HEK293T (cell line): ENCODE measurements at regions of chr5 and their contacts with region 1.

Region 1: DNA sequence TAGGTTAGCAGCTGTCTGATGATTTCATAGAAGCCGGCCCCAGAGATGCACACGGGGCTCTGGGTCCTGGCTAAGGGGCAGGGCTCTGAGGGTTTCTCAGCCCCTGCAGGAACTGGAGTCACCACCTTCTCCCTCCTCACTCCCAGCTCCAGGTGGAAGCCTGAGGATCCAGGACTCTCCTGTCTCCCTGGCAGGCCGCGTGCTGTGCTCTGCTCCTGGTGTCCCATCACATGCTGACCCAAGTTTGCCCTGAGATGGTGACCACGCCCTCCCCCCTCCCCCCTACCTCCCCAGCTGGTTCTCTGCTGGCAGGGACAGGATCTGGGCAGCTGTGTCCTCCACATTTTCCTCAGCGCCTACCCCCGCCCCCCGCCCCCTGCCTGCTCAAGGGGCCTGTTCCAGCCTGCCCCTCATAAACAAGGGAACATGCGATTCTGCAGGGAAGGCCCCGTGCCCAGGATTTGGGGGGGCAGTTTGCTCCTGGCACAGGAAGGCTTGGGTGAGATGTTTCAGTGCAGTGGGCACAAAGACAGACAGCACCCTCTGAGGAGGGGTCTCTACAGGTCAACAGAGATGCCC is 87.4 kb downstream of the PSD2 start:
- DNase-seq: no peak

Region 2: DNA sequence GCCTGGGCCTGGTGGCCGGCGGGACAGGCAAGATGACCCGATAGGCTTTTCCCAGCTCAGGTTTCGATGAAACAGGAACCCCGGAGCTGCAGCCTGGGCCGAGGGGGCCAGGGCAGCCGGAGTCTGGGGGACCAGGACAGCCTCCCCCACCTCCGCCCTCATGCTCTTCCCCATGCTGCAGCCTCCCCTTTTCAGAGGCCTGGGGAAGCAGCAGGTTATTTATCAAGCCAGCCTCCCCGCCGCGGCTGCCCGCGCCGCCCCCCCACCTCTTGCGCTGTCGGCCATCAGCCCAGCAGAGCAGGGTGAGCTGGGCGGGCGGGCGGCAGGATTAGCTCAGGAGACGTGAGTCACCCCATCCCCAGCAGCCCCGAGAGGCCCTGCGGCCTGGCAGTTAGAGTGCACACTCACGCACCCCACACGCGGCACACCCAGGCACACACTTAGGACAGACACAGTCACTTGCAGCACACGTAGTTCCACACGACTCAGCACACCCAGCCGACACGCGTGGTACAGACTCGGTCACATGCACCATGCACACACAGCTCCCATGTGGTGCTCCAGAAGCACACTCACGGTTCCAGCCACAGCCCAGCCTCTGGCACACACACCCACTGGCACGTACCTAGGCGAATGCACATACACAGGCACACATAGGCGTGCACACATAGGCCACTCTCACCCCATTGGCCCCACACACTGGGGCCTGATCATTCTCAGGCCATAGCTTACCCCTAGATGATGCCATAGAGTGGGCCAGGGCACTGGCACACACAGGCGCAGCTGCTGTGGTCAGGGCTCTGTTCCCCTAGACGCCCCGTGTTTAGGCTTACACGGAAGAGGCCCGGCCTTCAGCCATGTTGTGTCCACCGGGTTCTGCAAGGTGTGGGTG is 221.9 kb before region 1 on chr5:
- CTCF ChIA-PET with region 1: no interaction called
- POLR2A ChIA-PET with region 1: no interaction called
- DNase-seq: no peak

Region 3: GRCh38 chr5:139852696-139853095 is 30.4 kb before region 1 on chr5:
- CTCF ChIA-PET with region 1: no interaction called
- POLR2A ChIA-PET with region 1: no interaction called
- DNase-seq: no peak

Region 4: DNA sequence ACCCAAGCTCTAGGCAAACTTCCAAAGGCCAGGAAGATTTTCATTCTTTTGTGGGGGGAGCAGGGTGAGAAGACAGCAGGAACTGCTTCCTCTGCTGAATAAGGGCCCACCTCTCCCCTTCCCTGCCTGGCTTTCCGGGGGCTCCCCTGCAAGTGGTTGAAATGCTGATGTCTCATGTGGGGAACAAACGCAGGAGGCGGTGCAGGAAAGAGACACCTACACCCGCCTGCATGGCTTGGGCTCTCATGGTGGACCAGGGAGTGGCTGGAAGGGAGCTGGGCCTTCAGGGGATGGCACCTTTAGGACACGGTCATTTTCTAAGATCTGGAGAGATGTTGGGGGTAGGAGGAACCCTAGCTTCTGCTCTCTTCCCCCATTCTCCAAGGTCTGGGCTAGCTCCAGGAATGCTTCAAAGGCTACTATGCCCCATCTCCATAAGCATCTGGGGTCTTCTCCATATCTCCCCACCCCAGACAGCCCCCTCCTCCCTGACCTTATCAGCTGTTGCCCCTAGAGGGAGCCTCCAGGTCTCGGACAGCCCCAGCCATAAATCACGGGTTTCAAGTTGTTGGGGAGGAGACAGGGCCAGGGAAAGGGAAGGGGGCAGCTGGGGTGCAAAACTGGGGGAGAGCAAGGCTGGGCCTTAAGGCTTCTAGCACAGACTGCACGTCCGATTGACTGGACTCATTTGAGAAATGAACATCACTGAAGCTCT is 10.8 kb before region 1 on chr5:
- CTCF ChIA-PET with region 1: interaction called, 13 read pairs
- POLR2A ChIA-PET with region 1: no interaction called
- DNase-seq: no peak

Region 5: GRCh38 chr5:139908749-139909148 is 25.7 kb after region 1 on chr5:
- CTCF ChIA-PET with region 1: no interaction called
- POLR2A ChIA-PET with region 1: no interaction called
- DNase-seq: no peak